ENCODE measurements at regions of chr1 and their contacts with region 1.

Region 1: DNA sequence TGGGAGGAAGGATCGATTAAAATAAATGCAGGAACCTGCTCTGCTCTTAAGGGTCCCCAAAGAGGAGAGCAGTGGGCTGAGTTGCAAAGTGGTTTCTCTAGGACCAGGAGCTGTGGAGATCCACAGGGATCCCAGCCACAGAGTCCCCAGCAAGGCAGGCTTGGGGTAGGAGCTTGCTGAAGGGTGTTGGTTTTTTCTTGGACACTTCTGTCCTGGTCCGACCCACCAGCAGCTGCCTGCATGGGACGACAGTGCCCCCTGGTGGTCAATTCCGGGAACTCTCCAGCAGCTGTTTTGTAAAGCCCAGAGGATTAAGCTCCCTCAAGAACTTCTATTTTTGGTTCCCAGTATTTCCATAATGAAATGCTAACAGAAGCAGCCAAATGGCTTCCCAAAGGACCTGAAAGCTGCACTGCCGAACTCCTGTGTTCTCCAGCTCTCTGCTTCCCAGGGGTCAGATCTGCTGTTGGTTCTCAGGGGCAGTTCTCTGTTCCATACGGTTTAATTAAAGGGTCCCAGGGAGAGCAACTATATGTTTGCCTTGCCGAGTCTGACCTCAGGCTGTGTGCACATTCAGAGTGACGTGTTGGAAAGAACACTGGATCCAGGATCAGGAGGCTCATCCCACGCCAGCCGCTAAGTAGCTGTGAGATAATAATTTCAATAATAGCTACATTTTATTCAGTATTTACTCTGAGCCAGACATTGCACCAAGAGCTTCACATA is 23.2 kb downstream of the NENF start:
- DNase-seq: peak; percentile 68 to 86
- ATAC-seq: peak; percentile 89 to 92
- H3K4me3 ChIP-seq: peak overlapping the region; percentile 19 to 42 (median 36)
- H3K27ac ChIP-seq: peak overlapping the region; percentile 67 to 82 (median 75)
- H3K4me1 ChIP-seq: peaks cover 17 to 22% of the 10 kb centered on the region in 2 donors
- H3K27me3 ChIP-seq: no peaks in the 10 kb centered on the region
- CTCF ChIP-seq: peak; percentile 97 to 99 (median 98)
- POLR2A ChIP-seq: no peak

Region 2: GRCh38 chr1:212062832-212063438 is 393.0 kb before region 1 on chr1:
- in situ Hi-C with region 1: loop called (anchors 5 to 10 kb)
- intact Hi-C with region 1: loop called (anchors 2 kb)
- DNase-seq: no peak
- ATAC-seq: peak; percentile 51 to 58
- H3K4me3 ChIP-seq: no peak overlapping the region
- H3K27ac ChIP-seq: no peak overlapping the region
- H3K4me1 ChIP-seq: no peaks in the 10 kb centered on the region
- H3K27me3 ChIP-seq: no peaks in the 10 kb centered on the region
- CTCF ChIP-seq: peak; percentile 38 to 66 (median 50)
- POLR2A ChIP-seq: no peak

Region 3: DNA sequence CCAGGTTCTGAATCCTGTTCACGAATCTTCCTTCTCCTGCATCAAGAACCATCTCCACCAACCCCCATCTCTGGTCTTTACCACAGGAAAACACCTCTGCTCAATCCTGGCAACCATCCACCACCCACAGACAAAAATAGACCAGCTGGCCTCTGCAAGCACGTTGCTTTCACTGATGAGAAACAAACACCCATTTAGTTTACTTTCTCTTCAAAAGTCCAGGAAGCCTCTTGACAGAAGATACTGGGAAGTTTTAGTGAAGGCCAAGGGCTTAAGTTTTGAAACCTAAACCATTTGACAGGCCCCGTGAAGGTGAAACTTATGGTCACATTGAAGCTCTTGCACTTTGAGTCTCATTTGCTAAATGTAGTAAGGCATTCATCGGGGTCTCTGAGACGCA is 293.3 kb before region 1 on chr1:
- in situ Hi-C with region 1: no loop called
- intact Hi-C with region 1: loop called (anchors 5 kb)
- DNase-seq: peak; percentile 61 to 67
- ATAC-seq: peak; percentile 73 to 76
- H3K4me3 ChIP-seq: no peak overlapping the region
- H3K27ac ChIP-seq: peak overlapping the region; percentile 68 to 84 (median 76)
- H3K4me1 ChIP-seq: peaks cover 9 to 41% of the 10 kb centered on the region in 2 donors
- H3K27me3 ChIP-seq: no peaks in the 10 kb centered on the region
- CTCF ChIP-seq: no peak
- POLR2A ChIP-seq: no peak

Region 4: GRCh38 chr1:212315907-212316306 is 140.1 kb before region 1 on chr1:
- in situ Hi-C with region 1: no loop called
- intact Hi-C with region 1: loop called (anchors 10 kb)
- DNase-seq: no peak
- ATAC-seq: peak in 1 of 2 donors; percentile 78
- H3K4me3 ChIP-seq: no peak overlapping the region
- H3K27ac ChIP-seq: peak overlapping the region in 1 of 4 donors; percentile 40
- H3K4me1 ChIP-seq: peaks cover 22 to 41% of the 10 kb centered on the region in 2 donors
- H3K27me3 ChIP-seq: no peaks in the 10 kb centered on the region
- CTCF ChIP-seq: peak in 2 of 5 experiments; percentile 16 to 36
- POLR2A ChIP-seq: no peak

Region 5: GRCh38 chr1:212414328-212415106 is 41.4 kb before region 1 on chr1 and contains the start of gene PACC1:
- in situ Hi-C with region 1: no loop called
- intact Hi-C with region 1: loop called (anchors 5 kb)
- DNase-seq: peak; percentile 70 to 84
- ATAC-seq: peak; percentile 82 to 86
- H3K4me3 ChIP-seq: peak within 1 kb of the TSS; percentile 77 to 99 (median 90)
- H3K27ac ChIP-seq: peak within 1 kb of the TSS; percentile 9 to 68 (median 30)
- H3K4me1 ChIP-seq: peaks cover 0 to 6% of the 10 kb centered on the region in 2 donors
- H3K27me3 ChIP-seq: no peaks in the 10 kb centered on the region
- CTCF ChIP-seq: no peak
- POLR2A ChIP-seq: peak; percentile 19 to 30
- total RNA-seq, gene PACC1: 1.4 to 3.8 (median 2.5) TPM